Cardiac septum (tissue), 1 donor: ENCODE measurements at regions of chr19 and their contacts with region 1.

Region 1: DNA sequence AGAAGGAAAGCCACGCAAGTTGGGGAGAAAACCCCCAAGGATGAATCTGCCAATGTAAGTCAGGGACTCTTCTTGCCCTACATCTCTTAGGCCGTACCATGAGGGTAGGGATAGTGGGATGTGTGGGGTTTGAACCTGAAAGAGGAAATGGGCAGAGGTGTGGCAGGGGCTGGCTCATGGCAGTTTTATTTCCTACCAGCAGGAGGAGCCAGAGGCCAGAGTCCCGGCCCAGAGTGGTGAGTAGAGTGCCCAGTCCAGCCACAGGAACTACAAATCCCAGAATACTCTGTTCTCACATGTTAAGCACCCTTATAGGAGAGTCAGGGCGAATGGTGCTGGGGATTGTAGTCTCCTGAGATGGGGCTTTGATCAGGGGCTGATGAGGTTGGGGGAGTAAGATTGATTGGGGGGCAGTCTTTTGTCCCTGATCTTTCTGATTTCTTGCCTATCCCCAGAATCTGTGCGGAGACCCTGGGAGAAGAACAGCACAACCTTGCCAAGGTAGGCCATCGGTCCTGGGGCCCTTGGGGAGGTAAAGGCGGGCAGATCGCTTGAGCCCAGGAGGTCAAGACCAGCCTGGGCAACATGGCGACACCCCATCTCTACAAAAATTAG is 16.5 kb downstream of the VASP start:
- DNase-seq: peak; percentile 89

Region 2: GRCh38 chr19:45492627-45493470 is 30.9 kb before region 1 on chr19:
- intact Hi-C with region 1: no loop called
- DNase-seq: no peak

Region 3: GRCh38 chr19:45558399-45558878 is 34.7 kb after region 1 on chr19:
- intact Hi-C with region 1: loop called (anchors 5 kb)
- DNase-seq: no peak

Region 4: GRCh38 chr19:45569619-45570421 is 46.1 kb after region 1 on chr19:
- intact Hi-C with region 1: loop called (anchors 5 kb)
- DNase-seq: peak; percentile 88